ENCODE measurements at regions of chr22 and their contacts with region 1.

Region 1: DNA sequence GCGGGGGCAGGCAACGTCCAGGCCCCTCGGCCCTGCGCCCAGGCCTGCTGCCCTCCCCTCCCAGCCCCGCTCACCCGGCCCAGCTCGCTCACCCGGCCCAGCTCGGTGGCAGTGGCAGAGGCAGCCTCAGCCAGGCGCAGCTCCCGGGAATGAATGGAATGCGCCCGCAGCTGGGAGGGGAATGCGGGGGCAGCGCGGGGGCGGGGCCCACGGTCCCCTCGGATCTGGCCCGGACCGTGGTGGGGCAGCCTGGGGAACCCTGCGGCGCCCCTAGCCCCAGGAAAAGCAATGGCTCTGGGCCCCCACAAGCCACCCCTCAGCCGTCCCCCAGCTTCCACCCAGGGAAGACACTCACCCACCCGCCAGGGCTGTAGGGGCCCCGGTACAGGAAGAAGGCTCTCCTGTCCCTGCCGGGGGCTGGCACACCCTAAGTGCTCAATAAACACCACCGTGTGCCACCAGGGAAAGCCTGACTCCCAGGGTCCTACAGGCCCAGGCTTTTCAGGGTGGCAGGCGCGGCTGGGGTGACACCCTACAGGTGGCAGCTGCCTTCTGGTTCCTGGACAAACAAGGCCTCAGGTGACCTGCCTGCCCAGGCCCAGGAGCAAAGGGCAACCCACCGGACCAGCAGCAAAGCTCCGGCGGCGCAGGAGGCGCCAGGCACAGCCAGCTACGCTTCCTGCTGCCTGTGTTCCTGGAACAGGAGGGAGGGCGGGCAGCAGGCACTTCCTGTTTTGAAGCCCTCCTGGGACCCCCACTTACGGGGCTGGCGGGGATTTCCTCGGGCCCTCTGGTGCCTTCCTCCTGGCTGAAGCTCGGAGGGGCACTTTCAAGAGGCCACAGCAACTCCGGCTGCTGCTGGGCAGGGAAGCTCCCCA is 13.8 kb downstream of the PLXNB2 start:
- DNase-seq: peak; percentile 53
- ATAC-seq: peak; percentile 62
- H3K4me3 Mint-ChIP-seq: peak overlapping the region; percentile 74
- H3K27ac Mint-ChIP-seq: peak overlapping the region; percentile 42
- H3K4me1 Mint-ChIP-seq: peaks cover 10% of the 10 kb centered on the region
- H3K27me3 Mint-ChIP-seq: peaks cover 9% of the 10 kb centered on the region
- CTCF ChIP-seq: no peak

Region 2: GRCh38 chr22:50276143-50276542 is 17.5 kb before region 1 on chr22:
- CTCF ChIA-PET with region 1: interaction called, 19 read pairs
- POLR2A ChIA-PET with region 1: no interaction called
- intact Hi-C with region 1: no loop called
- DNase-seq: peak; percentile 67
- ATAC-seq: peak; percentile 80
- H3K4me3 Mint-ChIP-seq: no peak overlapping the region
- H3K27ac Mint-ChIP-seq: no peak overlapping the region
- H3K4me1 Mint-ChIP-seq: peaks cover 1% of the 10 kb centered on the region
- H3K27me3 Mint-ChIP-seq: peaks cover 8% of the 10 kb centered on the region
- CTCF ChIP-seq: peak; percentile 70

Region 3: GRCh38 chr22:50403701-50404101 is 110.0 kb after region 1 on chr22:
- CTCF ChIA-PET with region 1: no interaction called
- POLR2A ChIA-PET with region 1: no interaction called
- intact Hi-C with region 1: no loop called
- DNase-seq: no peak
- ATAC-seq: no peak
- H3K4me3 Mint-ChIP-seq: no peak overlapping the region
- H3K27ac Mint-ChIP-seq: no peak overlapping the region
- H3K4me1 Mint-ChIP-seq: peaks cover 23% of the 10 kb centered on the region
- H3K27me3 Mint-ChIP-seq: no peaks in the 10 kb centered on the region
- CTCF ChIP-seq: no peak